CD14-positive monocyte (primary cell): ENCODE measurements at regions of chr6 and their contacts with region 1.

Region 1: DNA sequence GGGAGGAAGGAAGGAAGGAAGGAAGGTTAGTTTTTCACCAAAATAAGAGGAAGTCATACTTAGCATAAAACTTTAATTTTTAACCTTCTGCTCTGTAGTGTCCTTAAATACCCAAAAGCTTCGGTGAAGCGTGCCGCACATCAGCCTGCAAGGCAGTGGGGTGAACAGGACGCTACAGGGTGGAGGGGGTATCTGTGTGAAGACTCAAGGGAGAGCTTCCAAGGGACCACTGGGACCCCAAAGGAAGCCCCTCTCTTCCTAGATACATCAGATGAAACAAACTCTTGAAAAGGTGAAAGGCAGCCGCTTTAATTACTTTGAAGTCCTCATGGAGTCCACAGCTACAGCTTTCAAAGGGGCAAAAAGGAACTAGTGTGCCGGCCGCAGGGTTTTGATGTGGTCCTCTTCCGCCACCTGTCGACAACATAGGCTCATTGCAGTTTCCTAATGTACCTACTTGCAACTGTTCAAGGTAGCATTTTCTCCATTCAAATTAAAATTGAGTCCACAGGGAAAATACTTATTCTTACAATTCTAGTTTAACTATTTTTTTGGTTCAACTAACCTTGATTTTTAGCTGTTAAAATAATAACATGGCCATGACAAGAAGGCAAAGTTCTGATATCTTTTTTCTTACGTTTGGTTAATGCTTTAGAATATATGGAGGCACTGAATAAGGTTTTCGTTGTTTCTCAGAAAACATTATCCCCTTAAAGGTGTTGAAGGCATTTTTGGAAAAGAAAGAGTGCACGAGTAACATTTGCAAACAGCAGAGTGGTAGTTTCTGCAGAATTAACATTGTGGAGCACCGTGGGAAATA is 135.0 kb upstream of the RIPOR2 start:
- DNase-seq: peak; percentile 72 to 86 (median 80)
- H3K4me3 ChIP-seq: no peak overlapping the region
- H3K4me3 Mint-ChIP-seq: peak overlapping the region; percentile 31 to 51
- H3K27ac ChIP-seq: peak overlapping the region in 1 of 2 donors; percentile 45
- H3K27ac Mint-ChIP-seq: peak overlapping the region in 5 of 7 donors; percentile 32 to 77 (median 71)
- H3K4me1 ChIP-seq: peaks cover 3 to 5% of the 10 kb centered on the region in 2 donors
- H3K4me1 Mint-ChIP-seq: peaks cover 6% of the 10 kb centered on the region
- H3K27me3 ChIP-seq: no peaks in the 10 kb centered on the region
- H3K27me3 Mint-ChIP-seq: peaks cover 0 to 3% (median 0%) of the 10 kb centered on the region in 3 donors
- CTCF ChIP-seq: peak; percentile 94

Region 2: GRCh38 chr6:24855395-24856245 is 215.1 kb before region 1 on chr6:
- intact Hi-C with region 1: loop called (anchors 2 kb)
- DNase-seq: peak; percentile 61 to 74 (median 69)
- H3K4me3 ChIP-seq: no peak overlapping the region
- H3K4me3 Mint-ChIP-seq: no peak overlapping the region
- H3K27ac ChIP-seq: peak overlapping the region in 1 of 2 donors; percentile 92
- H3K27ac Mint-ChIP-seq: peak overlapping the region in 6 of 7 donors; percentile 80 to 98 (median 94)
- H3K4me1 ChIP-seq: peaks cover 46 to 54% of the 10 kb centered on the region in 2 donors
- H3K4me1 Mint-ChIP-seq: peaks cover 50% of the 10 kb centered on the region
- H3K27me3 ChIP-seq: no peaks in the 10 kb centered on the region
- H3K27me3 Mint-ChIP-seq: peaks cover 0 to 2% (median 0%) of the 10 kb centered on the region in 3 donors
- CTCF ChIP-seq: peak; percentile 88

Region 3: GRCh38 chr6:25027221-25027916 is 43.4 kb before region 1 on chr6:
- intact Hi-C with region 1: loop called (anchors 5 to 10 kb)
- DNase-seq: no peak
- H3K4me3 ChIP-seq: peak overlapping the region in 1 of 3 experiments; percentile 61
- H3K4me3 Mint-ChIP-seq: peak overlapping the region; percentile 43 to 71
- H3K27ac ChIP-seq: peak overlapping the region in 1 of 2 donors; percentile 26
- H3K27ac Mint-ChIP-seq: peak overlapping the region in 2 of 7 donors; percentile 26 to 45
- H3K4me1 ChIP-seq: peaks cover 18 to 32% of the 10 kb centered on the region in 2 donors
- H3K4me1 Mint-ChIP-seq: peaks cover 28% of the 10 kb centered on the region
- H3K27me3 ChIP-seq: no peaks in the 10 kb centered on the region
- H3K27me3 Mint-ChIP-seq: no peaks in the 10 kb centered on the region
- CTCF ChIP-seq: peak; percentile 51

Region 4: DNA sequence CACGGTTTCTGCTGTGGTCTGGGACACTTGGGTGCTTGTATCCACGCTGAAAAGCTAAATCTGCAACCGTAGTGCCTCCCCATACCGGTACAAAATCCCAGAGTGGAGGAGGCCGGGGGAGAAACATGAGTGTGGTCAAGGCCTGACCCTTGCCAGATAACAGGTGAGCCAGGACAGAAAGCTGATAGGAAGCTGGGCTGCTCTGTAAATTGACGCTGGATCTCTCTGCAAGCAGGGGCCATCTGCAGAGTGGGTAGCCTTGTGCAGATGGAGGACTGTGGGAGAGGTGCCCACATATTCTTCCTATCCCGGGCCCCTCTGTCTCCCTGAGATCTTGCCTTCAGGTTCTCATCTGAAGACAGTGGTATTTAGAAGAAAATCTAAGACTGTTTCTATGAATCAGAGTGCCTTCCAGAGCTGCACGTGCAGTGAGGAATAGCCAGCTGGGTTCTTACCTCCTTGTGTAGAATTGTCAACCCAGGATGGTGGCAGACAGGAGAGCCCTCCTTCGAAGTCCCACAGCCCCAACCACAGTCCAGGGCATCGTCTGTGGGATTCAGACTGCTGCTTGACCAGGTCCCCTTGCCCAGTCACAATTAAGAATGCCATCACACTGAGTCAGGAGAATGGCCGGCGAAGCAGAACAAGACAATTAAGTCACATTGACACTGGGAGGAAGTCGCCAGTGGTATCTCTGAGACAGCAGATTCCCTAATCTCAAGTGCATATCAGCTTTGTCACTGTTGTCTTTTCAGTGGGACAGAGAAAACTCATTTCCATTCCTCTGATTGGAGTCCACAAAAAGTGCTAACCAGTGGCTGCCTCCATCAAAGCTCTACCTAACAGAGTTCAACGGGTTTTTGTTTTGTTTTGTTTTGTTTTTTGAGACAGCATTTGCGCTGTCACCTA is 35.0 kb before region 1 on chr6:
- intact Hi-C with region 1: loop called in 1 of 2 experiments (anchors 5 kb)
- DNase-seq: peak; percentile 46 to 72 (median 68)
- H3K4me3 ChIP-seq: peak overlapping the region; percentile 39 to 99 (median 71)
- H3K4me3 Mint-ChIP-seq: peak overlapping the region; percentile 89 to 97
- H3K27ac ChIP-seq: peak overlapping the region; percentile 64 to 93
- H3K27ac Mint-ChIP-seq: peak overlapping the region; percentile 83 to 98 (median 87)
- H3K4me1 ChIP-seq: peaks cover 18 to 44% of the 10 kb centered on the region in 2 donors
- H3K4me1 Mint-ChIP-seq: peaks cover 30% of the 10 kb centered on the region
- H3K27me3 ChIP-seq: no peaks in the 10 kb centered on the region
- H3K27me3 Mint-ChIP-seq: no peaks in the 10 kb centered on the region
- CTCF ChIP-seq: no peak

Region 5: DNA sequence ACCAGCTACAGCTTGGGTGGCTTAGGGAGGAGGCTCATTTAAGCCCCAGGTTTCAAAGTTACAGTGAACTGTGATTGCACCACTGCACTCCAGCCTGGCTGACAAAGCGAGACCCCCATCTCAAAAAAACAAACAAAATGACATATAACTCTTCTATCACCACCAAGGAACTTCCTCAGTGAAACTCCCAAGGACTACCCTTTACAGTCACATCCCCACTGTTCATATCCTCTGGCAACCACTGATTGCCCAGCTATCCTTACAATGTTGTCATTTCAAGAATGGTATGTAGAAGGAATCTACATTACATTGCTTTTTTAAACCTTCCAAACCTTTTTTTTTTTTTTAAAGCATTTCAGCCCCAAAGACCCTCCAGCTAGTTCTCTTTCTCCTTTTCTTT is 85.3 kb after region 1 on chr6:
- intact Hi-C with region 1: no loop called
- DNase-seq: no peak
- H3K4me3 ChIP-seq: no peak overlapping the region
- H3K4me3 Mint-ChIP-seq: no peak overlapping the region
- H3K27ac ChIP-seq: no peak overlapping the region
- H3K27ac Mint-ChIP-seq: peak overlapping the region in 1 of 7 donors; percentile 69
- H3K4me1 ChIP-seq: peaks cover 2 to 11% of the 10 kb centered on the region in 2 donors
- H3K4me1 Mint-ChIP-seq: peaks cover 38% of the 10 kb centered on the region
- H3K27me3 ChIP-seq: no peaks in the 10 kb centered on the region
- H3K27me3 Mint-ChIP-seq: no peaks in the 10 kb centered on the region
- CTCF ChIP-seq: no peak

Region 6: GRCh38 chr6:25193460-25194171 is 122.9 kb after region 1 on chr6:
- intact Hi-C with region 1: no loop called
- DNase-seq: no peak
- H3K4me3 ChIP-seq: no peak overlapping the region
- H3K4me3 Mint-ChIP-seq: no peak overlapping the region
- H3K27ac ChIP-seq: no peak overlapping the region
- H3K27ac Mint-ChIP-seq: no peak overlapping the region
- H3K4me1 ChIP-seq: no peaks in the 10 kb centered on the region
- H3K4me1 Mint-ChIP-seq: no peaks in the 10 kb centered on the region
- H3K27me3 ChIP-seq: no peaks in the 10 kb centered on the region
- H3K27me3 Mint-ChIP-seq: peaks cover 0 to 2% (median 2%) of the 10 kb centered on the region in 3 donors
- CTCF ChIP-seq: no peak

Region 7: DNA sequence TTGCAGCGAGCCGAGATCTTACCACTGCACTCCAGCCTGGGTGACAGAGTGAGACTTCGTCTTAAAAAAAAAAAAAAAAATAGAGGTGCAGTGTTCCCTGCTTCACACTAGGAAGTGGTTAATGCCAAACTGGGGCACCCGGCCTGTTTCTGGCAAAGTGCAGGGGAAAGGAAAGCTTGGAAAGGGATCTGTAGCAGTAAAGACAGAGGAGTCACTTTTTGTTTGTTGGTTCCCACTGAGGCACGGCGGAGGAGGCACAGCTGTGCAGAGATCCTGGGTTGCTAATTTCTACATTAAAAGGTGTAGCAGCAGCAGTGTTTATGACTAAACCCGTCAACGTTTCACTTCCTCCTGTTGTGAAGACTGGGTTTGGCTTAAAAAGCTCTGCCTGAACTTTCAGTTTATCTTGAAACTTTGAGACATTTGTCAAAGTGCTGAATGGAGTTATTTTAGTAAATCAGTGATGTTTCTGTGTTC is 334.0 kb after region 1 on chr6:
- intact Hi-C with region 1: no loop called
- DNase-seq: peak; percentile 31 to 78 (median 64)
- H3K4me3 ChIP-seq: peak overlapping the region; percentile 27 to 73 (median 70)
- H3K4me3 Mint-ChIP-seq: no peak overlapping the region
- H3K27ac ChIP-seq: peak overlapping the region; percentile 48 to 76
- H3K27ac Mint-ChIP-seq: peak overlapping the region in 2 of 7 donors; percentile 58 to 77
- H3K4me1 ChIP-seq: peaks cover 34 to 37% of the 10 kb centered on the region in 2 donors
- H3K4me1 Mint-ChIP-seq: no peaks in the 10 kb centered on the region
- H3K27me3 ChIP-seq: no peaks in the 10 kb centered on the region
- H3K27me3 Mint-ChIP-seq: no peaks in the 10 kb centered on the region
- CTCF ChIP-seq: no peak